HepG2 (cell line): ENCODE measurements at regions of chr2 and their contacts with region 1.

Region 1: DNA sequence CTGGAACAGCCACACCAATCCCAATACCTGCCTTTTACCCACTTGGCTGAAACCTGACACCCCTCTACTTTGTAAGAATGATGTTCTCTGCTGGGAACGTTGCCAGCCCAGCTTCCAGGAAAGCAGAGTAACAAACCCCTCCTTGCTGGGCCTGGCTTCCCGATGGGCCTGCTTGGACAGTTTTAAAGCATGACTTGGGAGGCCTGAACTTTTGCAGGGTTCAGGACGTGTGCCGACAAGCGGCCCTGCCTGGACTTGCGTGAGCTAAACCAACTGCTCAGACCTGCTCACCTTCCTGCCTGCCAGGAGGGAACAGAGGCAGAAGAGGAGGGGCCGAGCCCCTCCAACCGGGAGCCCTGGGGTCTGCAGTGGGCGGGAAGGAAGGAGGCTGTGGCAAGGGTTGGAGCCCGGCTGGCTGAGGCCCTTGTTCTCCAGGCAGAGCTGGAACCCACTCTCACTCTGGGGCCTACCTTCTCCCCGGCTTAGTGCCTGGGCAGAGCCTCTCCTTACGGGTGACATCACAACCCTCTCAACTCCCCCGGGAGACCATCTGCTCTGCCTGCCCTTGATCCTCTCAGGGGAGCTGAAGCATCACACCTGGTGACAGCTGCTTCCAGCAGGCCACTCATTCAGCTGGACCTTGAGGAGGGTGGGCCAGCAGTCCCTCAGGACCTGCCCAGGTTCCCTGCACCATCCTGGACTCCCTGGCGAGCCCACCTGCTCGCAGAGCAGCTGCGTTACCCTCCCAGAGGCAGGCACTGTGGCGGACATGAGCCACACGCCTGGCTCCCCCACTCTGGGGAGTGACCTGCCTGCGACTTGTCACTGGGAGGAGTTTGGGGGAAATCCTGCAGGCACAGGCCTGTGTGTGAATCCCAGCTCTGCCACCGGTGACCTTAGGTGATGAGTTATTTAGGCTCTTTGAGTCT is 13.2 kb downstream of the HS6ST1 start:
- DNase-seq: peak; percentile 76
- ATAC-seq: no peak; the same call in 2 of the 3 replicates
- H3K4me3 ChIP-seq: peak overlapping the region in 1 of 3 experiments; percentile 45; a peak in 1 of 6 replicates
- H3K27ac ChIP-seq: peak overlapping the region; percentile 56
- H3K4me1 ChIP-seq: peaks cover 75% of the 10 kb centered on the region
- H3K27me3 ChIP-seq: no peaks in the 10 kb centered on the region
- CTCF ChIP-seq: no peak
- EP300 ChIP-seq: peak in 1 of 2 experiments; percentile 59; a peak in 1 of 4 replicates
- POLR2A ChIP-seq: no peak
- RAD21 ChIP-seq: no peak

Region 2: GRCh38 chr2:128027801-128028667 is 277.4 kb before region 1 on chr2 and contains the start of gene SAP130:
- CTCF ChIA-PET with region 1: no interaction called
- POLR2A ChIA-PET with region 1: interaction called, 3 read pairs
- in situ Hi-C with region 1: no loop called
- intact Hi-C with region 1: loop called (anchors 5 kb)
- DNase-seq: peak; percentile 93
- ATAC-seq: peak; percentile 87
- H3K4me3 ChIP-seq: peak within 1 kb of the TSS; percentile 98 to 100 (median 100)
- H3K27ac ChIP-seq: peak within 1 kb of the TSS; percentile 91
- H3K4me1 ChIP-seq: peaks cover 26% of the 10 kb centered on the region
- H3K27me3 ChIP-seq: no peaks in the 10 kb centered on the region; a peak in 1 of 5 replicates
- CTCF ChIP-seq: no peak; the same call in 1 of the 2 replicates
- EP300 ChIP-seq: no peak
- POLR2A ChIP-seq: peak in 1 of 2 experiments; percentile 75; a peak in 3 of 4 replicates
- RAD21 ChIP-seq: 0 out of 2 replicates have a peak, but pooled peaks have one; percentile 31
- total RNA-seq, gene SAP130: 11.1 and 14.5 TPM in 2 replicates

Region 3: GRCh38 chr2:128172191-128172590 is 133.2 kb before region 1 on chr2:
- CTCF ChIA-PET with region 1: no interaction called
- POLR2A ChIA-PET with region 1: interaction called, 9 read pairs
- in situ Hi-C with region 1: loop called (anchors 5 kb)
- intact Hi-C with region 1: no loop called
- DNase-seq: peak; percentile 55
- ATAC-seq: peak; percentile 14; the same call in 2 of the 3 replicates
- H3K4me3 ChIP-seq: no peak overlapping the region
- H3K27ac ChIP-seq: peak overlapping the region; percentile 91
- H3K4me1 ChIP-seq: peaks cover 80% of the 10 kb centered on the region
- H3K27me3 ChIP-seq: no peaks in the 10 kb centered on the region
- CTCF ChIP-seq: peak; percentile 85
- EP300 ChIP-seq: 0 out of 4 replicates have a peak, but pooled peaks of 1 of the 2 experiments have one; percentile 6
- POLR2A ChIP-seq: no peak
- RAD21 ChIP-seq: no peak

Region 4: DNA sequence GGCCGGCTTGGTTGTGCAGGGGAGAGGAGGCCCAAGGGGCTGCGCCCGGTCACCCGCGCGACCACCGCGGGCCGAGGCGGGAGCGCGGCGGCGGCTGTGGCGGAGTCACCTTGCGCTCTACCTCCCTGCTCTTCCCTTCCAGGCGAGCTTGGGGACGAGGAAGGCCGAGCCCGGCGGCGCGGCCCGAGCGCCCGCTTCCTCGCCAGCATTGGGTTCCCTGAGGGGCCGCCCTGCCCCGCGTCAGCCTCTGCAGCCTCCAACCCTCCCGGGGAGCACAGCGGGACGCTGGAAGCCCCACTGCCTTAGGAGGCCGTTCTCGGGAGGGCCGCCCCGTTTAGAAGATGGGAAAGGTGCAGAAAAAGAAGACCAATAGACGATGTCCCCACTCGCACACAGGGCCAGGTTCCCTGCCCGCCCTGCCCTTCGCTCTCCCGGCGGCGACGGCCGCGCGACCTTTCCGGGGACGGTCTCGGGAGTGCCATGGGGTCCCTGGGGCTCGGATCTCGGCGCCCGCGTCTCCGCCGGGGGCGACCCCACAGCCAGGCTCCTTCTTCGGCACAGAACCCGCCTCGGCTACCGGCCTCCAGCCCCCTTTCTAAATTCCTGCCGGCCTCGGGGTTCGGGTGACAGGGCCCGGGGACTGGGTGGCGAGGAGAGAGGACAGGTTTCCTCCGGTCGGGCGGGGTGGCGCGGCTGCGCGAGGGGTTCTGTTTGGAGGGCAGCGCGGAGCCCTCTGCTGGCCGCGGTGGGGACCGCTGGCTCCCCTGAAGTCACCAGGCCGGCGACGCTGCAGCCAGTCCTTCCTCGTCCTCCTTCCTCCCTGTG is 72.2 kb before region 1 on chr2:
- CTCF ChIA-PET with region 1: interaction called, 3 read pairs
- POLR2A ChIA-PET with region 1: interaction called, 6 read pairs
- in situ Hi-C with region 1: no loop called
- intact Hi-C with region 1: loop called (anchors 5 kb)
- DNase-seq: peak; percentile 78
- ATAC-seq: peak; percentile 96
- H3K4me3 ChIP-seq: peak overlapping the region; percentile 71 to 89 (median 72)
- H3K27ac ChIP-seq: peak overlapping the region; percentile 78
- H3K4me1 ChIP-seq: peaks cover 38% of the 10 kb centered on the region
- H3K27me3 ChIP-seq: no peaks in the 10 kb centered on the region
- CTCF ChIP-seq: peak; percentile 99
- EP300 ChIP-seq: peak in 1 of 2 experiments; percentile 20; a peak in 1 of 4 replicates
- POLR2A ChIP-seq: peak; percentile 45 to 64; a peak in 2 of 4 replicates
- RAD21 ChIP-seq: peak; percentile 96

Region 5: GRCh38 chr2:128282976-128283810 is 22.2 kb before region 1 on chr2:
- CTCF ChIA-PET with region 1: no interaction called
- POLR2A ChIA-PET with region 1: interaction called, 3 read pairs
- in situ Hi-C with region 1: no loop called
- intact Hi-C with region 1: loop called (anchors 2 kb)
- DNase-seq: no peak
- ATAC-seq: peak; percentile 55
- H3K4me3 ChIP-seq: no peak overlapping the region
- H3K27ac ChIP-seq: no peak overlapping the region
- H3K4me1 ChIP-seq: peaks cover 15% of the 10 kb centered on the region; the same call in 1 of the 2 replicates
- H3K27me3 ChIP-seq: no peaks in the 10 kb centered on the region
- CTCF ChIP-seq: peak; percentile 54
- EP300 ChIP-seq: no peak
- POLR2A ChIP-seq: no peak
- RAD21 ChIP-seq: peak; percentile 59